WTC11 (cell line): ENCODE measurements at regions of chr1 and their contacts with region 1.

Region 1: GRCh38 chr1:119544165-119544762 is 37.3 kb downstream of the HSD3B1 start:
- DNase-seq: peak; percentile 73
- ATAC-seq: peak; percentile 92
- H3K4me3 Mint-ChIP-seq: no peak overlapping the region
- H3K27ac Mint-ChIP-seq: no peak overlapping the region
- H3K4me1 Mint-ChIP-seq: 0 out of 2 replicates have a peak, but pooled peaks cover 2% of the 10 kb centered on the region
- H3K27me3 Mint-ChIP-seq: no peaks in the 10 kb centered on the region
- CTCF ChIP-seq: 0 out of 2 replicates have a peak, but pooled peaks have one; percentile 29

Region 2: DNA sequence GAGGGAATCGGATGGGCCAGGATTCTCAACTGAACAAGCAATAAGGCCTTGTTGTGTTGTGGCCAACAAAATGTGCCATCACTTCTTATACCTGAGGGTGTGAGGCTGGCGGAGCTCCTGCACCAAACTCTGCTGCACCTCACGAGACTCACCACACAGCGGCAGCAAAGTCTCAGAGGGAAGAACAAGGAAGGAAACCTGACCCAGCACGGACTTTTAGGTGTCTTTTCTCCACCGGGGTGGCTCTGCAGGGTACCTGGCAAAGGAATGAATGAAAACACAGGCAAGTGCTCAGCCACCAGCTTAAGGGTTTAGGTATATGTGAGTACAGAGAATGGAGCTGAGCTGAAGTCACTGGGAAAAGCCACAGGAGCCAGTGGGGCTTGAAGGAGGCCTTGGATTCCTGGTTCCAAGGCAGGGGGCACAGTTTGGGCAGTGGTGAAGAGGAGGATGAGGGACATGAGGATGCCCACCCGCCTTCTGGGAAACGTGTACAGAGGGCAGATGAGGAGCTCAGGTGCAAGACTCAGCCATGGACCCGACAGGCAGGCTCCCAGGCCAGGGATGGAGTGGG is 68.3 kb before region 1 on chr1:
- CTCF ChIA-PET with region 1: interaction called, 27 read pairs
- POLR2A ChIA-PET with region 1: no interaction called
- DNase-seq: peak; percentile 88
- ATAC-seq: peak; percentile 96
- H3K4me3 Mint-ChIP-seq: no peak overlapping the region
- H3K27ac Mint-ChIP-seq: no peak overlapping the region
- H3K4me1 Mint-ChIP-seq: peaks cover 6% of the 10 kb centered on the region
- H3K27me3 Mint-ChIP-seq: peaks cover 2% of the 10 kb centered on the region; the same call in 1 of the 2 replicates
- CTCF ChIP-seq: peak; percentile 64

Region 3: GRCh38 chr1:119510046-119510445 is 34.2 kb before region 1 on chr1:
- CTCF ChIA-PET with region 1: interaction called, 10 read pairs
- POLR2A ChIA-PET with region 1: no interaction called
- DNase-seq: no peak
- ATAC-seq: no peak
- H3K4me3 Mint-ChIP-seq: no peak overlapping the region
- H3K27ac Mint-ChIP-seq: no peak overlapping the region
- H3K4me1 Mint-ChIP-seq: no peaks in the 10 kb centered on the region
- H3K27me3 Mint-ChIP-seq: peaks cover 7% of the 10 kb centered on the region; the same call in 1 of the 2 replicates
- CTCF ChIP-seq: no peak

Region 4: DNA sequence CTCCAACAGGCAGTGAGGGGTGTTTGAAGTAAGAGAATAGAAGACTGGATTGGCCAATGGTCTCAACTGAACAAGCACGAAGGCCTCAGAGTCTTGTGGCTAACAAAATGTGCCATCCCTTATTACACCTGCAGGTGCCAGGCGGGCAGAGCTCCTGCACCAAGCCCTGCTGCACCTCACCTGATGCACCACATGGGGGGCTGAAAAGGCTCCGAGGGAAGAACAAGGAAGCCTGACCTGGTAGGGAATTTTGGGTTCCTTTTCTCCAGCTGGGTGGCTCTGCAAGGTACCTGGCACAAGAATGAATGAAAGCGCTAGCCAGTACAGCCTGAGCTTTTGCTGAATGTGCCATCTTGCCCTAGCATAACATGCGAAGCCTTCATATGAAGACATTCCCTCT is 27.6 kb before region 1 on chr1:
- CTCF ChIA-PET with region 1: interaction called, 24 read pairs
- POLR2A ChIA-PET with region 1: no interaction called
- DNase-seq: peak; percentile 61
- ATAC-seq: peak; percentile 97
- H3K4me3 Mint-ChIP-seq: no peak overlapping the region
- H3K27ac Mint-ChIP-seq: no peak overlapping the region
- H3K4me1 Mint-ChIP-seq: no peaks in the 10 kb centered on the region
- H3K27me3 Mint-ChIP-seq: peaks cover 5% of the 10 kb centered on the region; the same call in 1 of the 2 replicates
- CTCF ChIP-seq: peak; percentile 35; the same call in 1 of the 2 replicates

Region 5: DNA sequence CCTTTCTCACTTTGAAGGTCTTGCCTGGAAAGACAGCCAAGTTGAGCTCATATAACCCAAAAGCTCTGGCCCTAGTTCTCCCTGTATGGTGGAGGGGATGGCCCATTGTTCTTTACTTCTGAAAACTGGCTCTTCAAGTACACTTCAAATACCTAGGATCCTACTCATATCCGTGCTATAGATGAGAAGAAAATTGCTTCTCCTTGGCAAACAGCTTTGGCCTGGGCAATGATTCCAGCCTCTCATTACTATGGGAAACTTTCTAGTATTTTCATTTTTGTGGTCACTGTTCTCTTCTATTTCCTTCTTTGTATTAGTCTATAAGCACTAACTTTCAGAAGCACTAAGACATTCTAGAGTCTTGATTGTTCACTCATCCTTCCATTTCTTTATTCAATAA is 50.1 kb after region 1 on chr1:
- CTCF ChIA-PET with region 1: no interaction called
- POLR2A ChIA-PET with region 1: no interaction called
- DNase-seq: no peak
- ATAC-seq: no peak
- H3K4me3 Mint-ChIP-seq: no peak overlapping the region
- H3K27ac Mint-ChIP-seq: no peak overlapping the region
- H3K4me1 Mint-ChIP-seq: no peaks in the 10 kb centered on the region
- H3K27me3 Mint-ChIP-seq: no peaks in the 10 kb centered on the region
- CTCF ChIP-seq: no peak